AG04450 (cell line): ENCODE measurements at regions of chr11 and their contacts with region 1.

Region 1: GRCh38 chr11:75562048-75562835 is at the start of gene SERPINH1:
- DNase-seq: no peak
- H3K4me3 ChIP-seq: peak within 1 kb of the TSS; percentile 77
- H3K27ac ChIP-seq: peak within 1 kb of the TSS; percentile 97
- H3K27me3 ChIP-seq: no peaks in the 10 kb centered on the region
- CTCF ChIP-seq: no peak
- polyA plus RNA-seq, gene SERPINH1: 881 and 1,147 TPM in 2 replicates

Region 2: DNA sequence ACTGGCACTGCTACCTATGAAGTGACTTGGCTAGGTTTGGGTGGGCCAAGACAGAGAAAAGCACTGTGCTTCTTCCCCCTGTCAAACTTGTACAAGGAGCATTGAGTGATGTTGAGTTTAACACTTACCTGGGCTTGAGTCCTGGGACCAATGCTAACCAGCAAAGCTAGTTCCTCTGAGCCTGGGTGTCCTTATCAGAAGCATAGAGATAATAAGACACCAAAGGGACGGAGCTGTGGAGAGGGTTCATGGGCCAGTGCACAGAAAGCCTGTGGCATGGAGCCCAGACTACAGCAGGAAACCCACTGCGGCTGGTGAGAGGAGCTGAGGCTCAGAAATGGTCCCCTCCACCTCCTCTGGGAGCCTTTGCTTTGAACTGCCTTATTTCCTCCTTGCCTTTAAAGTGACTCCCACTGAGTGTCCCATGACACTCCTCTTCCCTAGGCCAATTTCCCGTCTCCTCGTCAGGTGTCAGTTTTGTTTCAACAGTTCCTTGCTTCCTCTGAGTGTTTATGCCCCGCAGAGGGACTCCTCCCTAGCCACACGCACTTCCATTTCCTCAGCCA is 402.0 kb before region 1 on chr11:
- CTCF ChIA-PET with region 1: no interaction called
- POLR2A ChIA-PET with region 1: no interaction called
- DNase-seq: no peak
- H3K4me3 ChIP-seq: no peak overlapping the region
- H3K27ac ChIP-seq: no peak overlapping the region
- H3K27me3 ChIP-seq: peaks cover 49% of the 10 kb centered on the region
- CTCF ChIP-seq: no peak

Region 3: DNA sequence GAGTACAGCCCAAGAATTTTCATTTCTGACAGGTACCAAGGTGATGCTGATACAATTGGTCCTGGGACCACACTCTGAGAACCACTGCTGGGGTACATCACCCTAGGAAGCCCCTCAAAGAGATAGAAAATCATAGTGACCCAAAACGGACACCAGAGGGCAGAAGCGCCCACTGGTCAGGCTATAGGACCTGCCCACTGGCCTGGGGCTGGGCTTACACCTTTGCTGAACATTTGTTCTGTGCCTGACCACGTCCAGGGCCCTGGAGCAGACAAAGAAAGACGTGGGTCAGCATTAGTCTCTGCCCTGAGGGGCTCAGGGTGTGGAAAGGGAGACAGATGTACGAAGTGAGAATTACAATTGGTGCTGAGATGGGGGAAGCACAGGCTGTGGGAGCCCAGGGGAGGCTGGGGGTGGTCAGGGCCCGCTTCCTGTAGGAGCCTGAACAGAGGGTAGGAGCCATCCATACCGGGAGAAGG is 14.6 kb before region 1 on chr11:
- CTCF ChIA-PET with region 1: interaction called, 13 read pairs
- POLR2A ChIA-PET with region 1: interaction called, 6 read pairs
- DNase-seq: no peak
- H3K4me3 ChIP-seq: no peak overlapping the region
- H3K27ac ChIP-seq: no peak overlapping the region
- H3K27me3 ChIP-seq: peaks cover 3% of the 10 kb centered on the region
- CTCF ChIP-seq: peak; percentile 90

Region 4: DNA sequence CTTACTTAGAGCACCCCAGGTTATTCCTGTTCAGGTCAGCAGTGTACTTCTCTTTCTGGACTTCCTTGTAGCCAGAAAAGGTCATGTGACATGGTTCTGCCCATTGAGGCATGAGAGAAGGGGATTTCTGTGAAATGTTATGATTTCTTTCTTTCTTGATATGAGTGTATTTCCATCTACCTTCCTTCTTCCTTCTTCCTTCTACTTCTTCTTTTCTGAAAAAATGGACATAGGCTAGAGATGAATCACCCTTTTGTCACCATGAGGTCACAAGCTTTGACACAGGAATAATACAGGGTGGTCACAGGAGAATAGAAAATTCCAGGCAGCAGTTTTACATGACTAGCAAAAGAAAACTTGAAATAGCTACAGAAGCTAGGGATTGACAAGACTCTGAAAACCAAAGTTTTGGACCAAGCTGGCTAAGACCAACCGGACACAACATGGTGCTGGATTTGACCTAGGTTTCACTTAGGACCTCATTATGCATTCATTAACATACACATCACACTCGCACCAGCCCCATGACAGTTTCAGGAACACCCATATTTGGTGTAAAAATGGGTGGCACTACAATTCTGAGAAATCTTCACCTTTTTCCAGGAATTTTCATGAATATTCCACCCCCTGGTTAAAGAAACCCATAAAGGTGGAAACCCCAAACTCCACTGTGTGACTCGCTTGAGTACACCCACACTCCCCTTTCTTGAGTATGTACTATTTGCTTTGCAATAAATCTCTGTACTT is 127.8 kb after region 1 on chr11:
- CTCF ChIA-PET with region 1: no interaction called
- POLR2A ChIA-PET with region 1: no interaction called
- DNase-seq: no peak
- H3K4me3 ChIP-seq: no peak overlapping the region
- H3K27ac ChIP-seq: no peak overlapping the region
- H3K27me3 ChIP-seq: peaks cover 22% of the 10 kb centered on the region
- CTCF ChIP-seq: no peak

Region 5: GRCh38 chr11:75982309-75982708 is 420.1 kb after region 1 on chr11:
- CTCF ChIA-PET with region 1: no interaction called
- POLR2A ChIA-PET with region 1: no interaction called
- DNase-seq: no peak
- H3K4me3 ChIP-seq: no peak overlapping the region
- H3K27ac ChIP-seq: no peak overlapping the region
- H3K27me3 ChIP-seq: no peaks in the 10 kb centered on the region
- CTCF ChIP-seq: no peak